Dorsolateral prefrontal cortex (tissue), 120 donors: ENCODE measurements at regions of chr4 and their contacts with region 1.

Region 1: GRCh38 chr4:98586291-98586961 is 72.0 kb downstream of the TSPAN5 start:
- DNase-seq: no peak
- H3K4me3 ChIP-seq: peak overlapping the region in 55 of 59 donors; percentile 3 to 67 (median 45)
- H3K27ac ChIP-seq: peak overlapping the region in 58 of 59 donors; percentile 35 to 94 (median 87)
- H3K27me3 ChIP-seq: no peaks in the 10 kb centered on the region
- CTCF ChIP-seq: no peak

Region 2: DNA sequence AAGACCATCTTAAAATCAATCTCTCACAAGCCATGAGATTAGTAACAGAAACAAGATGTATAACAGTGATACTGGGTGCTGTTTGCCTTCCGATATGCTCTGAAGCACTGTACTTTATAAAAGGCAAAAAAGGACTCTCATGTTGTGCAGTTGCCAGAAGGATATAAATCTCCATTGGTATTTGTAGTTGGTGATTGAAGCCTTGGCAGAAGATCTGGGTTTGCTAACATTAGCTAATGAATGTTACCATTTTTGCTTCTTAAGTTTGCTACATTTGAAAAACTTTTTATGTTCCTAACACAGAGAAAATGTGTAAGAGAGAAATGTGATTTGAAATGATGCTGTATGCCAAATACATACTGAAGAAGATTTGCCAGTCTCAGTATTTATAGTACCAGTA is 280.9 kb before region 1 on chr4:
- intact Hi-C with region 1: no loop called
- DNase-seq: no peak
- H3K4me3 ChIP-seq: no peak overlapping the region
- H3K27ac ChIP-seq: peak overlapping the region in 4 of 59 donors; percentile 3 to 25 (median 8)
- H3K27me3 ChIP-seq: no peaks in the 10 kb centered on the region
- CTCF ChIP-seq: no peak

Region 3: GRCh38 chr4:98352396-98352795 is 234.0 kb before region 1 on chr4:
- intact Hi-C with region 1: no loop called
- DNase-seq: no peak
- H3K4me3 ChIP-seq: peak overlapping the region in 4 of 59 donors; percentile 2 to 19 (median 7)
- H3K27ac ChIP-seq: peak overlapping the region in 3 of 59 donors; percentile 9 to 12 (median 12)
- H3K27me3 ChIP-seq: no peaks in the 10 kb centered on the region
- CTCF ChIP-seq: no peak

Region 4: GRCh38 chr4:98452091-98452490 is 134.3 kb before region 1 on chr4:
- intact Hi-C with region 1: no loop called
- DNase-seq: no peak
- H3K4me3 ChIP-seq: no peak overlapping the region
- H3K27ac ChIP-seq: no peak overlapping the region
- H3K27me3 ChIP-seq: no peaks in the 10 kb centered on the region
- CTCF ChIP-seq: no peak

Region 5: DNA sequence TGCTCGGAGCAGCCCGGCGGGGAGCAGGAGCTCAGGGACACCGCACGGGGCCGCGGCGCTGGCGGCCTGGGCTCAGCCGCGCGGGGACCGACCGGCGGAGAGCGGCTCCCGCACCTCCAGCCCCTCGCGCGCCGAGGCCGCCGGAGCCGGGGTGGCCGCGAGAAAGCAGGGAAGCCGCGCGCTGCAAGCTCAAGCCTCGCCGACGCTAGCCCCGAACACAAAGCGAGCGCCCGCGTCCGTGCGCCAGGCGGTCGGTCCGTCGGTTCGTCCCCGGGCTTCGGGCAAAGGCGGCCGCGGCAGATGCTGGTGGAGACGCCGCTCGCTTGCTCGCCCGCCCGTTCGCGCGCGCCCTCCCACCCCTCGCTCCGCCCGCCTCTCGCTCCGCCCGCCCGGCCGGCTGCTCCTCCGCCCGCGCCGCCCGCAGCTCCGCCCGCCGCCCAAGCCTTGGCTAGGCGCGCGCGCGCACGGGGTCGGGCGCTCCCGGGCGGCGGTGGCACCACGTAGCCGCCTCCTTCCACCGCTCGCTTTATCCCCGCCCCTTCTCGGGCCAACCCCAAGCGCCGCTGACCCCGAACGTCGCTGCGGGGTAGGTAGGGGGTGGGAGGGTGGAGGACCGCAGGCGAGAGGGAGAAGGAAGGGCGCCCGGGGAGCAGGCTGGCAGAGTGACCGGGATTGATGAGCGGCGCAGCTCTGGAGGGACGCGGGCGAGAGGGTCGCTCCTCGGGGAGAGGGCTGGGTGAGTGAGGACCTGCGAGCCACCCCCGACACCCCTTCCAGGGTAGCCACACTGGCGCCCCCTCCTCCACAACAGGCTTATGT is 72.1 kb after region 1 on chr4 and contains the start of gene TSPAN5:
- intact Hi-C with region 1: loop called in 1 of 2 experiments (anchors 5 kb)
- DNase-seq: peak; percentile 56 to 90 (median 76)
- H3K4me3 ChIP-seq: peak within 1 kb of the TSS; percentile 59 to 96 (median 86)
- H3K27ac ChIP-seq: peak within 1 kb of the TSS; percentile 78 to 98 (median 94)
- H3K27me3 ChIP-seq: no peaks in the 10 kb centered on the region
- CTCF ChIP-seq: peak in 12 of 56 donors; percentile 3 to 35 (median 10)
- total RNA-seq, gene TSPAN5: 56.5 to 140 (median 109) TPM